ENCODE measurements at regions of chr7 and their contacts with region 1.

Region 1: DNA sequence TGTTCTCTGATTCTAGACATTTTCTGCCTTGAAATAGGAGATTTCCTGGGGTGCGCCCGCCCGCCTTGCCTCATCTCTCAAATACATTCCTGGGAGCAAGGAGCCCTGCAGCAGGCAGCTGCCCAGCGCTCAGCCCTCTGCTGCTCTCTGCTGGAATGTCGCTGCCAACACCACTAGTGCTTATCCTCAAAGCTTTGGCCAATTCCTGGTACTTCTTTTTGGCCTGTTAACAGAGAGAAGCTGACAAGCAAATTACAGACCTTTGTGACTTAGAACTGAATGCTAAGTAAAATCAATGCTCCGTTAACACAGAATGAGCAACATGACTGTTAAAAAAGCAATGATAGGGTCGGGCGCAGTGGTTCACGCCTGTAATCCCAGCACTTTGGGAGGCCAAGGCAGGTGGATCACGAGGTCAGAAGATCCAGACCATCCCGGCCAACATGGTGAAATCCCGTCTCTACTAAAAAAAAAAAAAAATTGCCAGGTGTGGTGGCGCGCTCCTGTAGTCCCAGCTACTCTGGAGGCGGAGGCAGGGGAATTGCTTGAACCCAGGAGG is 41.9 kb upstream of the SYPL1 start:
- DNase-seq: peak; percentile 83 to 87 (median 85)
- ATAC-seq: peak; percentile 99
- H3K4me3 ChIP-seq: no peak overlapping the region
- H3K27ac ChIP-seq: no peak overlapping the region
- H3K4me1 ChIP-seq: no peaks in the 10 kb centered on the region
- H3K27me3 ChIP-seq: peaks cover 45 to 62% of the 10 kb centered on the region in 2 experiments
- CTCF ChIP-seq: peak; percentile 97 to 99 (median 99)
- EP300 ChIP-seq: no peak
- POLR2A ChIP-seq: no peak
- RAD21 ChIP-seq: peak; percentile 100

Region 2: DNA sequence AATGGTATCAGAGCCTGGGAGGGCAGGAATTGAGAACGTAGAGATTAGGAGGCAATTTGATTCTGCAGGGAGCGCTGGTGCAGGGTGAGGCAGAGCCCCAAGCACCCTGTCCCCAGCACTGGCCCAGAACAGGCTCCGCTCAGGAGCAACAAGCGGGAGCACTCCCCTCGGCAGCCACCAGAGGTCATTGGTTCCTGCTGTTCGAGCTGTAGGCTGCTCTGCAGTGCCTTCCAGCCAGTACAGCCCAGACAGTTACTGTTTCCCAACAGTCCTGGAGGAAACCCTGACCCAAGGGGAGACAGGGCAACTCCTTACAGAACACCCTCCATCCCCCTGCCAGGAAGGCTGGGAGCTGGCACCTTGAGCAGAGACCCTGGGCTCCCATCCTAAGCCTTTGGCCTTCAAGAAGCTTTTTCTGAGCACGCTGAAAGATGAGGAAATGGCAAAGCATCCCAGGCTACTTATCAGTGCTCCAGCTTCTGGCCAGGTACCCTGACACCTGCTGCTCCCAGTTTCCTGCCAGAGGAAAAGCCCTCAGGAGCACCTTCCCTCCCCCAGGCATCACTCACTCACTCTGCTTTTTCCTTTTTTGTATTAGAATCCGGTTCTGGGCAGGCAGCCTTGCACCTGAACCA is 501.5 kb before region 1 on chr7:
- CTCF ChIA-PET with region 1: no interaction called
- POLR2A ChIA-PET with region 1: no interaction called
- in situ Hi-C with region 1: no loop called
- intact Hi-C with region 1: loop called (anchors 5 kb)
- DNase-seq: peak; percentile 84 to 88 (median 88)
- ATAC-seq: peak; percentile 97
- H3K4me3 ChIP-seq: no peak overlapping the region
- H3K27ac ChIP-seq: no peak overlapping the region
- H3K4me1 ChIP-seq: peaks cover 16 to 20% of the 10 kb centered on the region in 2 experiments; a peak in 4 of 5 replicates
- H3K27me3 ChIP-seq: no peaks in the 10 kb centered on the region; a peak in 1 of 5 replicates
- CTCF ChIP-seq: peak; percentile 95 to 98 (median 97)
- EP300 ChIP-seq: no peak
- POLR2A ChIP-seq: no peak
- RAD21 ChIP-seq: peak; percentile 88 to 95

Region 3: DNA sequence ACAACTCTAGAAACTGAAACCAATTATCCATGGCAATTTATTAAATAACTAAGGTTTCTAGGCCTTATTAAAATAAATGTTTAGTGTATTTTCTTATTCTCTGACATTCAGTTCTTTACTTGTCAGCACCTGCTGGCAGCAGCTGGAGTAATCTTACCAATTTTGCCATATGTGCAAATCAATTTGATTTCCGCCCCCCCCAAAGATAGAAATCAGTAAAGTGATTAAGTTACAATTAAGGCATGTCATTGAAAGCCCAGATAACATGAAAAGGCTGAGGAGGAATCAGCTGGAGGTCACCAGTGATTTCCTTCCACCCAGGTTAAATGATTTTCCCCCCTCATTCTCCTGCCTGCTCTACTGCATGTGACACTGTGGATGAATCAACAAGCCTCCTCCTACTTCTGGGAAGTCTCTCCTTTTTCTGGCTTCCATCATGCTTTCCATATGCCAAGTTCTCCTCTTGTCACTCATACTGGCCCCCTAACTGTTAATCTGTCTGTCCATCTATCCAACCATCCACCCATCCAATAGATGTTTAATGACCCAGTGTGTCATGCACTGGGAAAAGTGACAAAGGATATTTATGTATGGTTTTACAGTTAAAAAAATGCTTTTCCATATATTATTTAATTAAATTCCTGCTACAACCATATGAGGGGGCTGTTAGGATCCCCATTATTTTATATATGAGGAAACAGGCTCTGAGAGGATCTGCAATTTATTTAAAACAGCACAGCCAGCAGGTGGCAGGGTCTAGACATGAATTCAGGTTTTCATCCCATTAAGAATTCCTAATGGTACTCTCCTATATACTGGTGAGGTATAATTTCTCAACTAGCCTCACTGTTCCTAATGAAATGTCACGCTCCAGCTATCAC is 394.1 kb before region 1 on chr7:
- CTCF ChIA-PET with region 1: interaction called, 4 read pairs
- POLR2A ChIA-PET with region 1: no interaction called
- in situ Hi-C with region 1: no loop called
- intact Hi-C with region 1: loop called (anchors 5 kb)
- DNase-seq: peak; percentile 29 to 55 (median 36)
- ATAC-seq: peak; percentile 73
- H3K4me3 ChIP-seq: no peak overlapping the region
- H3K27ac ChIP-seq: no peak overlapping the region
- H3K4me1 ChIP-seq: no peaks in the 10 kb centered on the region
- H3K27me3 ChIP-seq: peaks cover 0 to 11% of the 10 kb centered on the region in 2 experiments; a peak in 1 of 5 replicates
- CTCF ChIP-seq: peak; percentile 65 to 89 (median 71); a peak in 5 of 6 replicates
- EP300 ChIP-seq: no peak
- POLR2A ChIP-seq: no peak
- RAD21 ChIP-seq: peak; percentile 81 to 87

Region 4: GRCh38 chr7:106041140-106041717 is 112.7 kb before region 1 on chr7:
- CTCF ChIA-PET with region 1: interaction called, 10 read pairs
- POLR2A ChIA-PET with region 1: no interaction called
- in situ Hi-C with region 1: no loop called
- intact Hi-C with region 1: no loop called
- DNase-seq: peak; percentile 87 to 95 (median 93)
- ATAC-seq: peak; percentile 91
- H3K4me3 ChIP-seq: no peak overlapping the region
- H3K27ac ChIP-seq: no peak overlapping the region
- H3K4me1 ChIP-seq: peaks cover 0 to 13% of the 10 kb centered on the region in 2 experiments; a peak in 3 of 5 replicates
- H3K27me3 ChIP-seq: peaks cover 5 to 34% of the 10 kb centered on the region in 2 experiments; a peak in 4 of 5 replicates
- CTCF ChIP-seq: peak; percentile 92 to 98 (median 92)
- EP300 ChIP-seq: no peak
- POLR2A ChIP-seq: no peak
- RAD21 ChIP-seq: peak; percentile 54 to 72

Region 5: GRCh38 chr7:106056513-106057203 is 97.3 kb before region 1 on chr7:
- CTCF ChIA-PET with region 1: interaction called, 125 read pairs
- POLR2A ChIA-PET with region 1: interaction called, 4 read pairs
- in situ Hi-C with region 1: loop called (anchors 5 kb)
- intact Hi-C with region 1: loop called (anchors 1 kb)
- DNase-seq: peak; percentile 82 to 89 (median 84)
- ATAC-seq: peak; percentile 98
- H3K4me3 ChIP-seq: no peak overlapping the region
- H3K27ac ChIP-seq: no peak overlapping the region
- H3K4me1 ChIP-seq: peaks cover 0 to 4% of the 10 kb centered on the region in 2 experiments; a peak in 2 of 5 replicates
- H3K27me3 ChIP-seq: peaks cover 38 to 70% of the 10 kb centered on the region in 2 experiments
- CTCF ChIP-seq: peak; percentile 93 to 97 (median 97)
- EP300 ChIP-seq: peak; percentile 5; the same call in 1 of the 2 replicates
- POLR2A ChIP-seq: no peak
- RAD21 ChIP-seq: peak; percentile 99 to 100